ENCODE measurements at regions of chr4 and their contacts with region 1.

Region 1: GRCh38 chr4:183074296-183074990 is 24.6 kb upstream of the WWC2 start:
- DNase-seq: no peak
- ATAC-seq: peak; percentile 37
- H3K4me3 Mint-ChIP-seq: peak overlapping the region; percentile 31
- H3K27ac Mint-ChIP-seq: peak overlapping the region; percentile 81
- H3K4me1 Mint-ChIP-seq: peaks cover 32% of the 10 kb centered on the region
- H3K27me3 Mint-ChIP-seq: no peaks in the 10 kb centered on the region
- CTCF ChIP-seq: no peak

Region 2: GRCh38 chr4:182938205-182938645 is 136.2 kb before region 1 on chr4:
- CTCF ChIA-PET with region 1: interaction called, 13 read pairs
- POLR2A ChIA-PET with region 1: no interaction called
- DNase-seq: peak; percentile 86
- ATAC-seq: peak; percentile 100
- H3K4me3 Mint-ChIP-seq: no peak overlapping the region
- H3K27ac Mint-ChIP-seq: no peak overlapping the region
- H3K4me1 Mint-ChIP-seq: peaks cover 16% of the 10 kb centered on the region
- H3K27me3 Mint-ChIP-seq: peaks cover 6% of the 10 kb centered on the region; the same call in 1 of the 2 replicates
- CTCF ChIP-seq: peak; percentile 86

Region 3: GRCh38 chr4:183030309-183030708 is 44.1 kb before region 1 on chr4:
- CTCF ChIA-PET with region 1: no interaction called
- POLR2A ChIA-PET with region 1: no interaction called
- DNase-seq: no peak
- ATAC-seq: no peak
- H3K4me3 Mint-ChIP-seq: no peak overlapping the region
- H3K27ac Mint-ChIP-seq: no peak overlapping the region
- H3K4me1 Mint-ChIP-seq: no peaks in the 10 kb centered on the region
- H3K27me3 Mint-ChIP-seq: no peaks in the 10 kb centered on the region
- CTCF ChIP-seq: no peak

Region 4: GRCh38 chr4:183098723-183099536 is 24.5 kb after region 1 on chr4 and contains the start of gene WWC2:
- CTCF ChIA-PET with region 1: interaction called, 20 read pairs
- POLR2A ChIA-PET with region 1: no interaction called
- DNase-seq: peak; percentile 96
- ATAC-seq: peak; percentile 80
- H3K4me3 Mint-ChIP-seq: peak within 1 kb of the TSS; percentile 91
- H3K27ac Mint-ChIP-seq: peak within 1 kb of the TSS; percentile 68
- H3K4me1 Mint-ChIP-seq: peaks cover 47% of the 10 kb centered on the region
- H3K27me3 Mint-ChIP-seq: peaks cover 3% of the 10 kb centered on the region
- CTCF ChIP-seq: no peak
- total RNA-seq, gene WWC2: 126 to 133 TPM (median 133 TPM) in 3 replicates

Region 5: DNA sequence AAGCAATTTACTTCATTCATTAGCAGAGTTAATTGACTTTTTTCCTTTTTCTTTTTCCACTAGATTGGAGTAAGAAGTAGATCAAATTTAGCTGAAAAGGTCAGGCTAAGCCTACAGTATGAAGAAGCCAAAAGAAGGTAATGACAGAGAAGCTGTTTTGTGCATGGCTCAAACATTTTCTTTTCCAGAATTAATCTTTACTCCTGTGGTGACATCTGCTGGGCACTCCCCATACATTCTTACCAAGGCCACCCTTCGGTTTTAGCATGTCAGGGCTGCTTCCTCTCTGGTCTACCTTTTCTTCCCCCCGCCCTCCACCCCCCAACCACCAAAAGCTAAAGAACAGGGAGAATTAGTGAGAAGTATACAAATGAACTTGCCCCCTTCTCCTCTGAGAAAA is 175.4 kb after region 1 on chr4:
- CTCF ChIA-PET with region 1: interaction called, 33 read pairs
- POLR2A ChIA-PET with region 1: interaction called, 5 read pairs
- DNase-seq: no peak
- ATAC-seq: peak; percentile 78
- H3K4me3 Mint-ChIP-seq: no peak overlapping the region
- H3K27ac Mint-ChIP-seq: peak overlapping the region; percentile 51
- H3K4me1 Mint-ChIP-seq: peaks cover 3% of the 10 kb centered on the region
- H3K27me3 Mint-ChIP-seq: no peaks in the 10 kb centered on the region
- CTCF ChIP-seq: no peak